ENCODE measurements at regions of chr15 and their contacts with region 1.

Region 1: GRCh38 chr15:39686000-39686613 is 96.5 kb downstream of the FSIP1 start:
- DNase-seq: no peak
- H3K4me3 ChIP-seq: no peak overlapping the region
- H3K27ac ChIP-seq: no peak overlapping the region
- H3K4me1 ChIP-seq: no peaks in the 10 kb centered on the region
- H3K27me3 ChIP-seq: no peaks in the 10 kb centered on the region
- CTCF ChIP-seq: peak in 10 of 11 experiments; percentile 38 to 78 (median 72)
- POLR2A ChIP-seq: no peak

Region 2: GRCh38 chr15:39756806-39757522 is 70.9 kb after region 1 on chr15:
- intact Hi-C with region 1: loop called (anchors 5 kb)
- DNase-seq: no peak
- H3K4me3 ChIP-seq: no peak overlapping the region
- H3K27ac ChIP-seq: no peak overlapping the region
- H3K4me1 ChIP-seq: no peaks in the 10 kb centered on the region
- H3K27me3 ChIP-seq: no peaks in the 10 kb centered on the region
- CTCF ChIP-seq: peak; percentile 25 to 87 (median 72)
- POLR2A ChIP-seq: no peak